ENCODE measurements at regions of chr11 and their contacts with region 1.

Region 1: DNA sequence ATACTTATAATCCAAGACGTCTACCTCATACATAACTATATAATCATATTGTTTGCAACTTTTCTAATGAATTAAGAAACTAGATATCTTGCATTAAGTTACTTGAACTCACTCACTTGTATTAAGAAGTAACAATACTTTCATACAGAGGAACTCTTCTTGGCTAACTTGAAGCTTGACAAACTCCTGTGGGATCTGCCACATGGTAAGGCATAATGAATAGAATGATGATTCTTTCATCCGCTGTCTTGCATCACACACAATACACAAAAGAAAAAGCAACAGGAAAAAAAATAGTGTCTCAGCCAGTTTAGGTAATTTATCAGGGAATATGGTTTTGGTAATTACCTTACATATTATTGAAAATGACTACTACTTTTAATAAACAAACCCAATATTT is 79.8 kb downstream of the PGR start:
- DNase-seq: no peak
- H3K4me3 ChIP-seq: no peak overlapping the region
- H3K27ac ChIP-seq: no peak overlapping the region
- H3K4me1 ChIP-seq: no peaks in the 10 kb centered on the region
- H3K27me3 ChIP-seq: no peaks in the 10 kb centered on the region
- CTCF ChIP-seq: no peak

Region 2: DNA sequence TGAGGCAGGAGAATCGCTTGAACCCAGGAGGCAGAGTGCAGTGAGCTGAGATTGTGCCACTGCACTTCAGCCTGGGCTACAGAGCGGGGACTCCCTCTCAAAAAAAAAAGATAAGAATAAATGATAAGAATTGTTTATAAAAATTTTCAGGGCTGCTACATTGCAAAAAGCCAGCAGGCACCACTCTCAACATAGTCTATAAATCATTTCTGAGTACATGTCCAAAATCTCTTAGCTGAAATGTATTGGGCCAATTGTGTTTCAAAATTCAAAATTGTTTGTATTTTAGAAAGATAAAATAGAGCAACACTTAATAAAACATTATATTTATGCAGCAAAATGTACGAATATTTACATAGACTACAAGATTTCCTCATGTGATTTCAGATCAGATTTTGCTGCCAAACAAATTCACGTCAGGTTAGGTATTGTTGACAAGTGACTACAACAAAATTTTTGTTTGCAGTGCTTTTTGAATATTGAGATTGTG is 65.9 kb after region 1 on chr11:
- CTCF ChIA-PET with region 1: interaction called, 19 read pairs
- POLR2A ChIA-PET with region 1: no interaction called
- intact Hi-C with region 1: no loop called
- DNase-seq: no peak
- H3K4me3 ChIP-seq: no peak overlapping the region
- H3K27ac ChIP-seq: no peak overlapping the region
- H3K4me1 ChIP-seq: no peaks in the 10 kb centered on the region
- H3K27me3 ChIP-seq: no peaks in the 10 kb centered on the region
- CTCF ChIP-seq: no peak